Activated CD4-positive, alpha-beta T cell treated with anti-CD3 and anti-CD28 coated beads, Interleukin-2, amount 10 ng/mL, durations not matched to agents 24 days and 14 days (primary cell): ENCODE measurements at regions of chr6 and their contacts with region 1.

Region 1: DNA sequence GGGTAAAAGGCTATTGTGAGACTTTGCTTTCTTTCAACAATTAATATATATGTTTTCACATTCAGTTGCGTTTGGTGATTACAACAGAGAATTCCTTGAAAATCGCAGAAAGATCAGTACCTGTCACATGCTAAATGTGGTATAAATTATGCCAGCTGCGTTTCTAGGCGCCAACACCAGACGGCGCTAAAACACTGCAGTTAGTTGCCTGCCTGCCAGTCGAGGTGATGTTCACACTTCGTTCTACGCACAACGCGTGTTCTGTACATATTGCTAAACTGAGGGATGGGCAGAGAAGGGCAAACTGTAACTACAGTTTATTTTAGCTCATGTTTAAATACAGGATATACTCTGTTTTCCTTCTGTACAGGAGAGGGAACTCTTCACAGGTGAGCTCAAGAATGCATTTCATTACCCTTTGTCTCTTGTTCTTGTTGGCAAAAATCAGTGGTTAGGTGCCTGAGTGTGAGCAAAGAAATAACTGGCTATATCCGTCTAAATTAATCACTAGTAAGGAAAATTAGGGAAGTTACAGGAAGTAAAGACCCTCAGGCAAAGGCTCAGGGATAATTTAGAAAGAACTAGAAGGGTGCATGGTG is 100.1 kb upstream of the RGS17 start:
- DNase-seq: peak; percentile 78
- H3K4me3 Mint-ChIP-seq: no peak overlapping the region
- H3K27ac Mint-ChIP-seq: no peak overlapping the region
- H3K4me1 Mint-ChIP-seq: no peaks in the 10 kb centered on the region
- H3K27me3 Mint-ChIP-seq: no peaks in the 10 kb centered on the region

Region 2: DNA sequence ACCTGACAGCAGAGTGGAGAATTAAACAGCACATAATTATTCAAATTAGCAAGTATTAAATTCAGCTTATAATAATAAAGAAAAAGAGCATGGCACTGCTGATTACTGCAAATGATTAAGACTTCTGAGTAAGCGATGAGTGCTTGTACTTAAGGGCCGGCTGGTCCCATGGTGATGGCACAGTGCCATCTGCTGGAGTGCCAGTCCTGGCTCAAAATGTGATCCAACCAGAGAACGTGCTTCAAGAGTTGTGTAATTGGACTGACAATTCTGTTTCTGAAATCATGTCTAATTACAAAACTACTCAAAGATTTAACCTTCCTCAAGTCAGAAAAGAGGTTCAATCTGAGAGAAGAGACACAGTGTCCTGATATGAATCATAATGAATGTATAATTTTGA is 81.5 kb after region 1 on chr6:
- intact Hi-C with region 1: loop called (anchors 2 kb)
- DNase-seq: peak; percentile 72
- H3K4me3 Mint-ChIP-seq: no peak overlapping the region
- H3K27ac Mint-ChIP-seq: no peak overlapping the region
- H3K4me1 Mint-ChIP-seq: no peaks in the 10 kb centered on the region
- H3K27me3 Mint-ChIP-seq: no peaks in the 10 kb centered on the region

Region 3: GRCh38 chr6:153511896-153512496 is 280.8 kb after region 1 on chr6:
- intact Hi-C with region 1: loop called (anchors 5 kb)
- DNase-seq: peak; percentile 67
- H3K4me3 Mint-ChIP-seq: no peak overlapping the region
- H3K27ac Mint-ChIP-seq: no peak overlapping the region
- H3K4me1 Mint-ChIP-seq: no peaks in the 10 kb centered on the region
- H3K27me3 Mint-ChIP-seq: no peaks in the 10 kb centered on the region

Region 4: DNA sequence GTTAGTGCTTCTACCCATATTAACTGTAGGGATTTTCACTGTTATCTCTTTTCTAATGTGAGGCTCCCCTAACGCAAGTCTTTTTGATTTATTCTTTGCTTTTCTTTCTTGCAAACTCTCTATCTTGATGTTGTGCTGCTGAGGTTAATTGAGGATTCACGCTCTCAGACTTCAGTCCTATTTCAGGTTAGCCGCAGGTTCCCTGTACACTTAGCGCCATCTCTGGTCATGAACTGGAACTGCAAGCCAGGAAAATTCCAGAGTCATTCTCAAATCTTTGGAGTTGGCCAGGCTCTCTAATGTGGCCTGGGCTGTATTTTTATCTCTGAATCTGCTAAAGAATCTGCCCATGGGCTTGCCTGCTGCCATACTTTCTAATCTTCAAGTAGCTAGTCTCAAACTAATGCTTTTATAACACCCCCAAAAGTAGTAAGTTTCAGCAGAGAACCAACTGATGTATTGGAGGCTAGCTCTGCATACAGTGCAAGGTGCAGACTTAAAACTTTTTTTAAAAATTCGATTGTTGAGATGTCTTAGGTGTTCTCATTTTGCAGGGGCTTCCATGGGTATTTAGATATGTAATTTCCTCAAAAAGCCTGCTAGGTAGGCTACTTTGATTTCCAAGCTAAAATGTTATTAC is 716.8 kb after region 1 on chr6:
- intact Hi-C with region 1: loop called (anchors 2 kb)
- DNase-seq: peak; percentile 56
- H3K4me3 Mint-ChIP-seq: no peak overlapping the region
- H3K27ac Mint-ChIP-seq: no peak overlapping the region
- H3K4me1 Mint-ChIP-seq: no peaks in the 10 kb centered on the region
- H3K27me3 Mint-ChIP-seq: no peaks in the 10 kb centered on the region